WTC11 (cell line): ENCODE measurements at regions of chr9 and their contacts with region 1.

Region 1: GRCh38 chr9:128438343-128439109 is 17.3 kb upstream of the ODF2 start:
- DNase-seq: peak; percentile 97
- ATAC-seq: peak; percentile 98
- H3K4me3 Mint-ChIP-seq: no peak overlapping the region
- H3K27ac Mint-ChIP-seq: no peak overlapping the region
- H3K4me1 Mint-ChIP-seq: peaks cover 9% of the 10 kb centered on the region
- H3K27me3 Mint-ChIP-seq: peaks cover 7% of the 10 kb centered on the region; the same call in 1 of the 2 replicates
- CTCF ChIP-seq: peak; percentile 98

Region 2: GRCh38 chr9:128361986-128362646 is 76.4 kb before region 1 on chr9:
- CTCF ChIA-PET with region 1: interaction called, 24 read pairs
- POLR2A ChIA-PET with region 1: no interaction called
- DNase-seq: peak; percentile 88
- ATAC-seq: peak; percentile 66
- H3K4me3 Mint-ChIP-seq: peak overlapping the region; percentile 43
- H3K27ac Mint-ChIP-seq: no peak overlapping the region
- H3K4me1 Mint-ChIP-seq: peaks cover 40% of the 10 kb centered on the region
- H3K27me3 Mint-ChIP-seq: peaks cover 57% of the 10 kb centered on the region
- CTCF ChIP-seq: peak; percentile 85

Region 3: GRCh38 chr9:128412120-128412790 is 26.3 kb before region 1 on chr9:
- CTCF ChIA-PET with region 1: interaction called, 33 read pairs
- POLR2A ChIA-PET with region 1: interaction called, 3 read pairs
- DNase-seq: peak; percentile 99
- ATAC-seq: peak; percentile 81
- H3K4me3 Mint-ChIP-seq: no peak overlapping the region
- H3K27ac Mint-ChIP-seq: no peak overlapping the region
- H3K4me1 Mint-ChIP-seq: peaks cover 42% of the 10 kb centered on the region
- H3K27me3 Mint-ChIP-seq: peaks cover 84% of the 10 kb centered on the region
- CTCF ChIP-seq: peak; percentile 83

Region 4: GRCh38 chr9:128455849-128456612 is 17.5 kb after region 1 on chr9 and contains the start of gene ODF2:
- CTCF ChIA-PET with region 1: interaction called, 26 read pairs
- POLR2A ChIA-PET with region 1: no interaction called
- DNase-seq: peak; percentile 99
- ATAC-seq: peak; percentile 87
- H3K4me3 Mint-ChIP-seq: peak within 1 kb of the TSS; percentile 85
- H3K27ac Mint-ChIP-seq: peak within 1 kb of the TSS; percentile 82
- H3K4me1 Mint-ChIP-seq: peaks cover 14% of the 10 kb centered on the region
- H3K27me3 Mint-ChIP-seq: peaks cover 82% of the 10 kb centered on the region
- CTCF ChIP-seq: no peak
- total RNA-seq, gene ODF2: 29.3 to 31.9 TPM (median 29.9 TPM) in 3 replicates

Region 5: DNA sequence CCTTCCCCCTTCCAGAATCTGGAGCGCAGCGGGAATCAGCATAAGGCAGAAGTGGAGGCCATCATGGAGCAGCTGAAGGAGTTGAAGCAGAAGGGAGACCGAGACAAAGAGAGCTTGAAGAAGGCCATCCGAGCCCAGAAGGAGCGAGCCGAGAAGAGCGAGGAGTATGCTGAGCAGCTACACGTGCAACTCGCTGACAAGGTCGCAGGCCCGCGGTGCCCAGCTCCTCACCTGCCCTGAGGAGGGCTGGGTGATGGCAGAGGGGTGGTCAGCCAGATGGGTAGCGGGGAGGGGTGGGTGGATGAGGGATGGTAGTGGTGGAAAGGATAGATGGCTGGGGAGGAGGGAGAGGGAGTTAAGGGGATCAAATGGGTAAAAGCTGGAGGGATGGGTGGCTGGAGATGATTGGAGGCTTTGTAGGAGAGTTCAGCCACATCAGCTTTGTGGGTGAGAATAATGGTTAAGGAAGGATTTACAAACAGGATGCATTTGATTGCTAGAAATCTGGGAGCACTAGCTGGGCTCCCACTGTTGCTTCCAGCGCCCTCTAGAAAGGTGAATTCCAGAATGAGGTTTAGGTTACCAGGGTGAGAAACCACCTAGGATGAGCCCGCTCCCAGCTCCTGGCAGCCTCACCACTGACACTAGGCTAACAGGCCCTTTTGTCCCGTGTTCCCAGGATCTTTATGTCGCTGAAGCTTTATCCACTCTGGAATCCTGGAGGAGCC is 46.3 kb after region 1 on chr9:
- CTCF ChIA-PET with region 1: interaction called, 11 read pairs
- POLR2A ChIA-PET with region 1: no interaction called
- DNase-seq: no peak
- ATAC-seq: peak; percentile 65
- H3K4me3 Mint-ChIP-seq: no peak overlapping the region
- H3K27ac Mint-ChIP-seq: peak overlapping the region; percentile 26; the same call in 1 of the 2 replicates
- H3K4me1 Mint-ChIP-seq: no peaks in the 10 kb centered on the region
- H3K27me3 Mint-ChIP-seq: no peaks in the 10 kb centered on the region
- CTCF ChIP-seq: no peak

Region 6: GRCh38 chr9:128504485-128505413 is 66.2 kb after region 1 on chr9 and contains the start of gene GLE1:
- CTCF ChIA-PET with region 1: interaction called, 14 read pairs
- POLR2A ChIA-PET with region 1: no interaction called
- DNase-seq: peak; percentile 96
- ATAC-seq: peak; percentile 94
- H3K4me3 Mint-ChIP-seq: peak within 1 kb of the TSS; percentile 99
- H3K27ac Mint-ChIP-seq: peak within 1 kb of the TSS; percentile 99
- H3K4me1 Mint-ChIP-seq: peaks cover 11% of the 10 kb centered on the region
- H3K27me3 Mint-ChIP-seq: no peaks in the 10 kb centered on the region
- CTCF ChIP-seq: no peak
- total RNA-seq, gene GLE1: 19.0 to 19.7 TPM (median 19.3 TPM) in 3 replicates

Region 7: DNA sequence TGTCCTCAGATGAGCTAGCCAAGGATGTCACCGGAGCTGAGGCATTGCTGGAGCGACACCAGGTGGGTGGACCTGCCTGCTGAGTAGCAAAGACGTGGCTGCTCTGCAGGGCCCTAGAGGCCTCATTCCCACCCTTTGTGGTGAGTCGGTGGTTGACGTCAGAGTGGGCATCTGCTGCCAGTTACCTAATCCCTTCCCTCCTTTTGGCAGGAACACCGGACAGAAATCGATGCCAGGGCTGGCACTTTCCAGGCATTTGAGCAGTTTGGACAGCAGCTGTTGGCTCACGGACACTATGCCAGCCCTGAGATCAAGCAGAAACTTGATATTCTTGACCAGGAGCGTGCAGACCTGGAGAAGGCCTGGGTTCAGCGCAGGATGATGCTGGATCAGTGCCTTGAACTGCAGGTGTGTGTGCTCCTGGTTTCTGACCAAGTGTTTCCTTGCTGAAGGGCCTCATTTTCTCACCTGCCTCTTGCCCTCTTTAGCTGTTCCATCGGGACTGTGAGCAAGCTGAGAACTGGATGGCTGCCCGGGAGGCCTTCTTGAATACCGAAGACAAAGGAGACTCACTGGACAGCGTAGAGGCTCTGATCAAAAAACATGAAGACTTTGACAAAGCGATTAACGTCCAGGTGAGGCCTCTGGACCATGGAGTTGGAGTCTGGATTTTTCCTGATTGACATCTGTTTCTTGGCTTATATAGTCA is 169.3 kb after region 1 on chr9:
- CTCF ChIA-PET with region 1: no interaction called
- POLR2A ChIA-PET with region 1: no interaction called
- DNase-seq: no peak
- ATAC-seq: no peak
- H3K4me3 Mint-ChIP-seq: no peak overlapping the region
- H3K27ac Mint-ChIP-seq: no peak overlapping the region
- H3K4me1 Mint-ChIP-seq: no peaks in the 10 kb centered on the region
- H3K27me3 Mint-ChIP-seq: no peaks in the 10 kb centered on the region
- CTCF ChIP-seq: no peak

Region 8: GRCh38 chr9:128635283-128636023 is 196.9 kb after region 1 on chr9:
- CTCF ChIA-PET with region 1: interaction called, 13 read pairs
- POLR2A ChIA-PET with region 1: no interaction called
- DNase-seq: peak; percentile 84
- ATAC-seq: peak; percentile 79
- H3K4me3 Mint-ChIP-seq: no peak overlapping the region
- H3K27ac Mint-ChIP-seq: peak overlapping the region; percentile 15; the same call in 1 of the 2 replicates
- H3K4me1 Mint-ChIP-seq: peaks cover 3% of the 10 kb centered on the region; the same call in 1 of the 2 replicates
- H3K27me3 Mint-ChIP-seq: no peaks in the 10 kb centered on the region
- CTCF ChIP-seq: peak; percentile 53; the same call in 1 of the 2 replicates